Breast epithelium (tissue), 4 donors: ENCODE measurements at regions of chr14 and their contacts with region 1.

Region 1: DNA sequence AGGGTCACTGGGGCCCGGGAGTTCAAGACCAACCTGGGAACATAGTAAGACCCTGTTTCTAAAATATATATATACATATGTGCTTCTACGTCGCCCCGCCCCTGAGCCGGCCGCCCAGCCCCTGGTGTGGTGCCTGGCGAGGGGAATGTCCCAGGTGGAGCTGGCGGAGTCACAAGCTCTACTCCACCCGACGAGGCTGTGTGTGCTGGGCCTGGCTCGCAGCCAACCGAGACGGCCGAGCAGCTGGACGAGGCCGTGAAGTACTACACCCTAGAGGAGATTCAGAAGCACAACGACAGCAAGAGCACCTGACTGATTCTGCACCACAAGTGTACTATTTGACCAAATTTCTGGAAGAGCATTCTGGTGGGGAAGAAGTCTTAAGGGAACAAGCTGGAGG is 22.1 kb upstream of the ITPK1 start:
- DNase-seq: peak in 1 of 2 donors; percentile 70
- H3K4me3 ChIP-seq: no peak overlapping the region
- H3K27ac ChIP-seq: no peak overlapping the region
- H3K4me1 ChIP-seq: no peaks in the 10 kb centered on the region
- H3K27me3 ChIP-seq: no peaks in the 10 kb centered on the region
- CTCF ChIP-seq: no peak
- POLR2A ChIP-seq: no peak

Region 2: DNA sequence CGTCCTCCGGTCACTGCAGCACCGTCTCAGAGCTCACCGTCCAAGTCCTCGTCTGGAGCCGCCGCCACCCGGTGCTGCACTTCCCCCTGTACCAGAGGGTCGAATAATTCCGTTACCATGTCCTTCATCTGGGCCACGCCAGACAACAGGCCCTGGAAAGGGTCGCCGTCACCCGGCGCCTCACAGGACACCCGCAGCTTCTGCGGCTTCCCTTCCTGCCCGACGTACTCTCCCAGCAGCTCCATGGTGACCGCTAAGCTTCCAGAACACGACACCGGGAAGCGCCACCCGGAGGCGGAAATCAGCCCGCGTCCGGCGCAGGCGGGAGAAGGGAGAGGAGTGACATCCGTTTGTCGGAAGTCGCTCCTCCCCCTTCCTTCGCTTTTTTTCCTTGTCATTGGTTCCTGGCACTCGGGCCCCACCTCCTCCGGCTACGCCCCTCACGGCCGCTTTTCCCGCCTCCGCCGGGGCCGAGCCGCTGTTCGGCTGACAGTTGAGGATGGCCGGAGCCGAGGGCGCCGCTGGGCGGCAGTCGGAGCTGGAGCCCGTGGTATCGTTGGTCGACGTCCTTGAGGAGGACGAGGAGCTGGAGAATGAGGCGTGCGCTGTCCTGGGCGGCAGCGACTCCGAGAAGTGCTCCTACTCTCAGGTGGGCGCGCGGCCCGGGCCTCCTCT is 69.1 kb after region 1 on chr14 and contains the starts of genes GON7 and UBR7:
- intact Hi-C with region 1: loop called (anchors 2 kb)
- DNase-seq: peak; percentile 94 to 95
- H3K4me3 ChIP-seq: peak within 1 kb of the TSS; percentile 75 to 84 (median 81)
- H3K27ac ChIP-seq: peak within 1 kb of the TSS; percentile 85 to 92
- H3K4me1 ChIP-seq: peaks cover 0 to 5% of the 10 kb centered on the region in 2 donors
- H3K27me3 ChIP-seq: no peaks in the 10 kb centered on the region
- CTCF ChIP-seq: peak in 2 of 3 donors; percentile 13 to 26
- POLR2A ChIP-seq: peak; percentile 10
- total RNA-seq, gene GON7: 8.5 to 12.1 (median 11.1) TPM
- total RNA-seq, gene UBR7: 21.0 to 34.7 (median 31.0) TPM

Region 3: GRCh38 chr14:93245764-93246420 is 108.0 kb after region 1 on chr14:
- intact Hi-C with region 1: no loop called
- DNase-seq: no peak
- H3K4me3 ChIP-seq: no peak overlapping the region
- H3K27ac ChIP-seq: no peak overlapping the region
- H3K4me1 ChIP-seq: no peaks in the 10 kb centered on the region
- H3K27me3 ChIP-seq: no peaks in the 10 kb centered on the region
- CTCF ChIP-seq: no peak
- POLR2A ChIP-seq: no peak